CD4-positive, alpha-beta memory T cell (primary cell): ENCODE measurements at regions of chr4 and their contacts with region 1.

Region 1: GRCh38 chr4:113869743-113870375 is 108.3 kb upstream of the CAMK2D start:
- DNase-seq: peak in 1 of 5 donors; percentile 5
- H3K4me3 ChIP-seq: no peak overlapping the region
- H3K4me3 Mint-ChIP-seq: peak overlapping the region in 2 of 8 donors; percentile 36 to 47
- H3K27ac ChIP-seq: no peak overlapping the region
- H3K27ac Mint-ChIP-seq: peak overlapping the region in 5 of 7 donors; percentile 33 to 60 (median 44)
- H3K4me1 ChIP-seq: peaks cover 5% of the 10 kb centered on the region
- H3K4me1 Mint-ChIP-seq: peaks cover 5 to 11% (median 6%) of the 10 kb centered on the region in 4 donors
- H3K27me3 ChIP-seq: no peaks in the 10 kb centered on the region
- H3K27me3 Mint-ChIP-seq: no peaks in the 10 kb centered on the region

Region 2: DNA sequence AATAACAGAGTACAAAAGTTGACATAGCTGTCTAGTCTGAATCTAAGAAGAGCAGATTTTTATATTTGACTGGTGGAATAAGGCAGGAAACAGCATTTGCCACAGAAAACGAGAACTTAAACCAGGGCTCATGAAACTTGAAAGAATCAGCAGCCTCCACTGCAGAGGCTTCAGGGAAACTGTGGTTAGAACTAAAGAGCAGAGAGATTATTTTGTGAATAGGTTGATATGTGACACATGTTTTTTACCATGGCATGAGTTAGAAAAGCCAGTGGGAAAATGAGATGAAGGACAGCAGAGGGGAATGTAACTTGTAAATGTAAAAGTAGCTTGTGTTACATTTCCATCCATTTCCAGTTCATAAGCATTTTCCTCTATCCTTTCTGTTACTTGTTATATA is 44.6 kb before region 1 on chr4:
- CTCF ChIA-PET with region 1: no interaction called
- POLR2A ChIA-PET with region 1: no interaction called
- intact Hi-C with region 1: loop called (anchors 5 kb)
- DNase-seq: peak in 4 of 5 donors; percentile 32 to 36 (median 34)
- H3K4me3 ChIP-seq: no peak overlapping the region
- H3K4me3 Mint-ChIP-seq: peak overlapping the region in 6 of 8 donors; percentile 0 to 74 (median 55)
- H3K27ac ChIP-seq: no peak overlapping the region
- H3K27ac Mint-ChIP-seq: peak overlapping the region in 4 of 7 donors; percentile 1 to 28 (median 20)
- H3K4me1 ChIP-seq: peaks cover 26% of the 10 kb centered on the region
- H3K4me1 Mint-ChIP-seq: peaks cover 28 to 43% (median 36%) of the 10 kb centered on the region in 4 donors
- H3K27me3 ChIP-seq: no peaks in the 10 kb centered on the region
- H3K27me3 Mint-ChIP-seq: no peaks in the 10 kb centered on the region